Heart right ventricle (tissue), 16 donors: ENCODE measurements at regions of chr10 and their contacts with region 1.

Region 1: DNA sequence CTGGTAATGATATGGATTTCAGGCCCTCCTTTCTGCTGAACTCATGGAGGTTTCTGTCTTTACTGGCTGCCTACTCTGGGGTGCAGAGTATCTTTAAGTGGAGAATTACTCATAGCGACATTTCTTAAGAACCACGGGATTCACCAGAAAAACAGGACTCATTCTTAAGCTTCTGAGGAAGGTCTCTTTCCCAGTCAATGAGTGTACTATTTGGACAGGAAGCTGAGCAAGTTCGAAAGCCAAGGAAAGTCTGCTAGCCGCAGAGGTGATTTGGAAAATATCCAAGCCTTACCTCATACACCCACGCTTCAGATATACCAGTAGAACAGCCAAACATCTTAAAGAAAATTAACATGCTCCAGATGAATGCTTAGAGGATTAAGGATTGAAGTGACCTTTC is 377.6 kb upstream of the MYO3A start:
- DNase-seq: no peak
- ATAC-seq: no peak
- H3K4me3 ChIP-seq: no peak overlapping the region
- H3K27ac ChIP-seq: no peak overlapping the region
- H3K4me1 ChIP-seq: no peaks in the 10 kb centered on the region
- H3K27me3 ChIP-seq: peaks cover 0 to 7% (median 0%) of the 10 kb centered on the region in 7 donors
- CTCF ChIP-seq: no peak

Region 2: DNA sequence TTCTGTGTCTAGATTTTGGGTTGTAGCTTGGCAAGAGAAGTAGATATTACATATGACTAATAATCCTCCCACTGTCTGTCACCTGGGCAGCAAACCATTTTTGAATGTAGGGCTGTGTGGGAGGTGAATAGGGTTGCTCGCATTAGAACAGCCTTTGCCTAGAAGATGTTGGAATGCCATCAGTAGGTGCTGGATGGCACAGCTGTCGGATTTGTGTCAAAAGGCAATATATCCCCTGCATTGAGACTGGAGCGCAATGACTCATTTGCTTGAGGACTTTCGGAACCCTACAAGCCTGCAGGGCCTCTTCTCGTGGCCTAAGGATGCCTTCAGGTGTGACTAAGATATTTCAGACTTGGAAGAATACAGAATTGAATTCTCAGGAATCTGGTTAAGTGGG is 57.8 kb before region 1 on chr10:
- intact Hi-C with region 1: loop called in 1 of 10 experiments (anchors 2 kb)
- DNase-seq: no peak
- ATAC-seq: no peak
- H3K4me3 ChIP-seq: no peak overlapping the region
- H3K27ac ChIP-seq: no peak overlapping the region
- H3K4me1 ChIP-seq: peaks cover 0 to 7% (median 0%) of the 10 kb centered on the region in 9 donors
- H3K27me3 ChIP-seq: peaks cover 0 to 3% (median 0%) of the 10 kb centered on the region in 7 donors
- CTCF ChIP-seq: no peak